Activated CD4-positive, alpha-beta memory T cell treated with anti-CD3 and anti-CD28 coated beads for 36 hours (primary cell): ENCODE measurements at regions of chr18 and their contacts with region 1.

Region 1: DNA sequence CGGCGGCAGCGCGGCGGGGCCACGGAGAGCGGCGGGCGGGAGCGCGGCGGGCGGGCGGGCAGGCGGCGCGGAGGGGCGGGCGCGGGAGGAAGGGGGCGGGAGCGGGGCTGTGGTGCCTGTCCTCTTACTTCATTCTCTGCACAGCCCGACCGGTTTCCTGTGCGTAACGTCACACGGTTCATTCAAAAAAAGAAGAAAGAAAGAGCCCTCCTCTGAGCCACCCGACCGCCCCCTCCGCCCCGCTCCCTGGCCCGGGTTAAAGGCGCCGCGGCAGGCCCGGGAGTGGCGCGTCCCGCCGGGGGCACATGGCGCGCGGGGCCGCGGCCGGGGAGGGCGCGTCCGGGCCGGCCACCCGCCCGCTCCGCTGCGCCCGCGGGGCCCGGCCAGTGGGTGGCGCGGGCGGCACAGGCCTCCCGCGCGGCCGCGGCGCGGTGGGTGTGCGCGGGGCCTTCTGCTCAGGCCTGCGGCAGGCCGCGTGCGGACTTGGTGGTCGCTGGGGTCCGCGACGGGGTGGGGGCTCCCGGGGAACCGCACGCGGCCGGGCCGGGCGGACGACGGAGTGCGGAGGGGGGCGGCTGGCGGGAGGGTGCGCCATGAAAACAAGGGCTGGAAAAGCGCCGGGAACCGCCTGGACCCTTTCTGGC is 599 bp upstream of the BCL2 start:
- DNase-seq: peak; percentile 89
- H3K4me3 Mint-ChIP-seq: peak overlapping the region; percentile 83
- H3K27ac Mint-ChIP-seq: peak overlapping the region; percentile 83
- H3K4me1 Mint-ChIP-seq: peaks cover 26% of the 10 kb centered on the region
- H3K27me3 Mint-ChIP-seq: no peaks in the 10 kb centered on the region

Region 2: GRCh38 chr18:62714671-62715435 is 605.3 kb before region 1 on chr18:
- CTCF ChIA-PET with region 1: no interaction called
- POLR2A ChIA-PET with region 1: no interaction called
- intact Hi-C with region 1: loop called (anchors 2 kb)
- DNase-seq: peak; percentile 97
- H3K4me3 Mint-ChIP-seq: peak overlapping the region; percentile 78
- H3K27ac Mint-ChIP-seq: peak overlapping the region; percentile 66
- H3K4me1 Mint-ChIP-seq: peaks cover 31% of the 10 kb centered on the region
- H3K27me3 Mint-ChIP-seq: peaks cover 2% of the 10 kb centered on the region

Region 3: DNA sequence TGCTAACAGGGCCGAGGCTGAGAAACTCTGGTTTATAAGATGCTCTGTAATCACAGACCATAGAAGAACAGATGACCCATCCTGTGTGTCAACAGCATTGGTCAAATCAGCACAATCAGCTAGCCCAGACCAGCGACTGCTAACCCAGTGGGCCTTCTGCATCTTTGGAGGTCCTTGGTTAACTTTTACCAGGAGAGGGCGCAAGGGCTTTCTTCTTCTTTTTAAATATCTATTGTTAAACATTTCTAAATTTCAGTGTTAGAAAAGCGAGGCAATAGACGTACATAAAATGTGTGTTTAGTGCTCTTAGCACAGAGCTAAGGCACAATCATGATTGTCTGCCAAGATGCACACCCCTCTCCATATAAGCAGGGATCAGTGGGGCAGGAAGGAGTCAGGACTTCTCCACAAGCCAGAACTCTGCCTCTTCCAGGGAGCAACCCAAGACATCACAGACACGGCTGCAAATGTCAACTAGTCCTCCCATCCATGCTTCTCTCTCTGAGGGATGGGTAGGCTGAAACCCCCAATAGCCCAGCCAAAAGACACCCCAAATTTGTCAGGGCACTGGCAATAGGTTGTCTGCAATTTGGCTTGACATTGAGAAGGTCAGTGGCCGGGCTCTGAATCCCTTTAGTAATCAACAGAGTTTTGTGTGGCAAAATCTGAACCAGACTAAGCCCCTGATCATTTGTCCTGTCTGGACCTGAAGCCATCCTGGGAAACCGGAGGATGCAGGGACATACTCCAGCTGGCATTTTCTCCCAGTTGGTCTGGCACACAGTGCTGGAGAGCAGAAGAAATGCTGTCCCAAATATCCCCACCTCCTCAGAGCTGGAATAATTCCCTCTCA is 188.8 kb before region 1 on chr18:
- CTCF ChIA-PET with region 1: interaction called, 54 read pairs
- POLR2A ChIA-PET with region 1: interaction called, 4 read pairs
- intact Hi-C with region 1: loop called (anchors 1 kb)
- DNase-seq: peak; percentile 64
- H3K4me3 Mint-ChIP-seq: no peak overlapping the region
- H3K27ac Mint-ChIP-seq: peak overlapping the region; percentile 65
- H3K4me1 Mint-ChIP-seq: peaks cover 30% of the 10 kb centered on the region
- H3K27me3 Mint-ChIP-seq: no peaks in the 10 kb centered on the region

Region 4: GRCh38 chr18:63186520-63187222 is 133.5 kb before region 1 on chr18:
- CTCF ChIA-PET with region 1: interaction called, 11 read pairs
- POLR2A ChIA-PET with region 1: interaction called, 7 read pairs
- intact Hi-C with region 1: no loop called
- DNase-seq: no peak
- H3K4me3 Mint-ChIP-seq: no peak overlapping the region
- H3K27ac Mint-ChIP-seq: peak overlapping the region; percentile 61
- H3K4me1 Mint-ChIP-seq: peaks cover 85% of the 10 kb centered on the region
- H3K27me3 Mint-ChIP-seq: no peaks in the 10 kb centered on the region

Region 5: DNA sequence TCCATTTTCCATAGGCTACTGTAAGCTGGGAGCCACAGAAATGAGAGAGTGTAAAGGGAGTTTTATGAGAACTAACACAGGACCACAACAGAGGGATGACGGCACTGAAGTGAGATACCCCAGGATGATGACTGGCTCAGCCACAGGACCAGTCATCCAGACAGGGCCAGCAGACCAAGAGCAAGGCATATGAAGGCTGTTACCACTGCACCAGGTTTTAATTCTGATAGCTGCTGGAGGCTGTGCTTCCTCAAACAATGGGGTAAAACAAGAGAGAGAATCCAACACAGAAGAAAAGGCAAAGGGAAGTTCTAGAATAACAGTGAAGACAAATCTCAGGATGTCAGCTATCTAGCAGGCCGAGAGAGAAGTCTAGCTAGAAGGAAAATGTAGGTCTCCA is 95.5 kb before region 1 on chr18:
- CTCF ChIA-PET with region 1: interaction called, 13 read pairs
- POLR2A ChIA-PET with region 1: interaction called, 5 read pairs
- intact Hi-C with region 1: no loop called
- DNase-seq: peak; percentile 71
- H3K4me3 Mint-ChIP-seq: no peak overlapping the region
- H3K27ac Mint-ChIP-seq: peak overlapping the region; percentile 71
- H3K4me1 Mint-ChIP-seq: peaks cover 75% of the 10 kb centered on the region
- H3K27me3 Mint-ChIP-seq: no peaks in the 10 kb centered on the region

Region 6: DNA sequence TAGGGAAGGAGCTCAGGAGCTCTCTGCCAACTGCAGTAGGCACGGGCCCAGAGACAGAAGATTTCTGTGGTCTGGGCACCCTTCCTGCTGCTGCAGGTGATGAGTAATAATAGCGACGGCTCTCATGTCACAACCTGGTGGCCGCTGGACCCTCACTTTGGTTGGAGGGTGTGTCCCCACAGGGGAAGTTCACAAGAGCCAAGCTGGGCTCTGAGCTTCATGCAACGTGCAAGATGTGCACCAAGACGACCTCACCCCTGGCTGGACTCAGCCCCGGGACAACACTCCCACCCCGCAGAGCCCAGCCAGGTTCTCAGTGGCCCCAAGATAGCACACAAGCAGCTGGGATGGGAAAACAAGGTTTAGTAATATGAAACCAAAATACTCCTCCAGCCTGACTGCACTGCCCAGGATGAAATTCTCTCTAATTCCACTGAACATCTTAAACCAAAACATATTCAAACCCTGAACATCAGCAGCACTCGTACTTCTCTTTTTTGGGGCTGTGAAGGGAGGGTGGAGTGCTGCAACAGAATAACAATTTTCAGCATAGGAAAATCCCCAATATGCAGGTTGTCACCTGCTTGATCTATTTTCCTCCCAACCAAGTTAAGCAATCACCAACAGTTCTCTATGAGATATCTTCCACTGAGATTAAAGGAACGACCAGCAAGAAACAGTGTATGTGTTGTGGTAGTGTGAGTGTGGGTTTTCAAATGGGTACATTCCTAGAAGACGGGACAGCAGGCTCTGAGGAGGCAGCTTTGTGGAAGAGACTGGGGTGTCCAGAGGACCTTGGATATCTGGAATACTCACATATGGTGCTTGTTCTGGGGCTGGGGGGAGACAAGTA is 27.1 kb before region 1 on chr18:
- CTCF ChIA-PET with region 1: interaction called, 54 read pairs
- POLR2A ChIA-PET with region 1: interaction called, 3 read pairs
- intact Hi-C with region 1: loop called (anchors 1 kb)
- DNase-seq: peak; percentile 58
- H3K4me3 Mint-ChIP-seq: peak overlapping the region; percentile 0
- H3K27ac Mint-ChIP-seq: peak overlapping the region; percentile 19
- H3K4me1 Mint-ChIP-seq: peaks cover 62% of the 10 kb centered on the region
- H3K27me3 Mint-ChIP-seq: no peaks in the 10 kb centered on the region

Region 7: GRCh38 chr18:63439334-63439733 is 119.2 kb after region 1 on chr18:
- CTCF ChIA-PET with region 1: interaction called, 19 read pairs
- POLR2A ChIA-PET with region 1: no interaction called
- intact Hi-C with region 1: loop called (anchors 1 kb)
- DNase-seq: peak; percentile 54
- H3K4me3 Mint-ChIP-seq: no peak overlapping the region
- H3K27ac Mint-ChIP-seq: no peak overlapping the region
- H3K4me1 Mint-ChIP-seq: no peaks in the 10 kb centered on the region
- H3K27me3 Mint-ChIP-seq: peaks cover 7% of the 10 kb centered on the region